PC-9 (cell line): ENCODE measurements at regions of chr15 and their contacts with region 1.

Region 1: GRCh38 chr15:66327736-66328135 is 28.7 kb downstream of the TIPIN start:
- DNase-seq: no peak
- H3K4me3 ChIP-seq: no peak overlapping the region
- H3K27ac ChIP-seq: no peak overlapping the region
- H3K4me1 ChIP-seq: no peaks in the 10 kb centered on the region
- H3K27me3 ChIP-seq: no peaks in the 10 kb centered on the region
- CTCF ChIP-seq: no peak

Region 2: DNA sequence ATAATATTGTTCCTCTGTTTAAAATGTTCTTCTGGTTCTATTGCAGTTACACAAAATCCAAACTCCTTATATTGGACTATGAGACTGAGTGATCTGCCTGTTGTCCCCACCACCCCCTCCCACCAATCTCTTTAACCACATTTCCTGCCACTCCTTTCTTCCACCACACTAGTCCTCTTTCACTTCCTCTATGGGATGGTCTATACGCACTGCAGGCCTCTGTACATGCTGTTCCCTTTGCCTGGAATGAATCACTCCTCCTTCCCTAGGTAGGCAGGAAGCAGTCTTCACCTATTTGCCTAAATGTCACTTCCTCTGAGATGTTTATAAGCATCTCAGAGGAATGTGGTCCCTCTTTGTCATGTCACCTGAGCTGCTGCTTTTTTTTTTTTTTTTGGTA is 62.9 kb after region 1 on chr15:
- CTCF ChIA-PET with region 1: no interaction called
- POLR2A ChIA-PET with region 1: no interaction called
- intact Hi-C with region 1: no loop called
- DNase-seq: no peak
- H3K4me3 ChIP-seq: no peak overlapping the region
- H3K27ac ChIP-seq: 0 out of 2 replicates have a peak overlapping the region, but pooled peaks have one; percentile 6
- H3K4me1 ChIP-seq: peaks cover 19% of the 10 kb centered on the region
- H3K27me3 ChIP-seq: no peaks in the 10 kb centered on the region
- CTCF ChIP-seq: no peak

Region 3: DNA sequence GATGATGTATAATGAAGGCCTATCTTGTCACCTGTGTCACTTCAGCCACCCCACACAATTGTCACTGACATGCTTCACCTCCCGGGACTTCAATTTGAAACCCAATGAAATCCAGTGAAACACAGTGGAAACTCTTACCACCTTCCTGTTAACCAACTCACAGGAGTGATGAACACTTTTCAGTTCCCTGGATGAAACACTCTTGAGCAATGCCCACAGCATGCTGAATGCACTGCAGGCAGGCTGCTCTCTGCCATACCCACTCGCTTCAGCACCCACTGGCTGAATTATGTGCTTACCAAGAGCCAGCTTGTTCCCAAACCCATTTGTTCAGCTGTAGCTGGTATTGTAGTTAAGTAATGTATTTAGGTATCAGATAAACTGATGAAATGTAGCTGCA is 106.0 kb after region 1 on chr15:
- CTCF ChIA-PET with region 1: interaction called, 11 read pairs
- POLR2A ChIA-PET with region 1: no interaction called
- intact Hi-C with region 1: no loop called
- DNase-seq: no peak
- H3K4me3 ChIP-seq: no peak overlapping the region
- H3K27ac ChIP-seq: no peak overlapping the region
- H3K4me1 ChIP-seq: no peaks in the 10 kb centered on the region
- H3K27me3 ChIP-seq: no peaks in the 10 kb centered on the region
- CTCF ChIP-seq: no peak